ENCODE measurements at regions of chr7 and their contacts with region 1.

Region 1: GRCh38 chr7:47818796-47819606 is 129.3 kb downstream of the PKD1L1 start:
- DNase-seq: peak; percentile 41 to 59 (median 50)
- H3K4me3 ChIP-seq: no peak overlapping the region
- H3K4me3 Mint-ChIP-seq: no peak overlapping the region
- H3K27ac ChIP-seq: no peak overlapping the region
- H3K27ac Mint-ChIP-seq: no peak overlapping the region
- H3K4me1 ChIP-seq: peaks cover 11 to 13% of the 10 kb centered on the region in 2 donors
- H3K4me1 Mint-ChIP-seq: peaks cover 20% of the 10 kb centered on the region
- H3K27me3 ChIP-seq: no peaks in the 10 kb centered on the region
- H3K27me3 Mint-ChIP-seq: peaks cover 0 to 2% (median 2%) of the 10 kb centered on the region in 3 donors
- CTCF ChIP-seq: peak; percentile 95

Region 2: DNA sequence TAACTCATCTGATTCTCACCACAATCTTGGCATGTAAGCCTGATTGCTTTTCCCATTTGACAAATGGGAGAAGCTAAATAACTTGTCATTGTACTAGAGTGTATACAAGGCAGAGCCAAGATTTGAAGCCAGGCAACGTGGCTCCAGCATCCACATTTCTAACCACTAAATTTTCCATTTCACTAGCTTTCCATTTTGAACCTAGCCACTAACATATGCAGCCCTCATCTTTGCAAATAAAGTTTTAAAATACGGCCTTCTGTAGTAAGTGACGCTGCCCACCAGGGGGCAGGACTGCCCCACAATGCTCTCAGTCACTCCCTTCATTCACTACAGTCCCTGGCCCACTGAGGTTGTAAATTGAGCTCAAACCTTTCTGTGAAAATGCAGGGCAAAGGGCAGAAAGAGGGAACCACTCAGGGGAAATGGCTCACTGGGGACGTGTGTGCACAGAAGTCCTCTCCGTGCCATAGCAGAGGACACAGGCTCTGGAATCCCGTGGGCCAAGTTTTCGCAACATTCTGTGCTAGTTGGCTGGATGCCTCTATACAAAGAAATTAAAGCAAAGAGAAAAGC is 552.8 kb before region 1 on chr7:
- intact Hi-C with region 1: loop called (anchors 2 to 5 kb)
- DNase-seq: peak; percentile 22 to 48 (median 41)
- H3K4me3 ChIP-seq: no peak overlapping the region
- H3K4me3 Mint-ChIP-seq: no peak overlapping the region
- H3K27ac ChIP-seq: no peak overlapping the region
- H3K27ac Mint-ChIP-seq: peak overlapping the region in 1 of 7 donors; percentile 49
- H3K4me1 ChIP-seq: no peaks in the 10 kb centered on the region
- H3K4me1 Mint-ChIP-seq: peaks cover 12% of the 10 kb centered on the region
- H3K27me3 ChIP-seq: no peaks in the 10 kb centered on the region
- H3K27me3 Mint-ChIP-seq: peaks cover 0 to 5% (median 0%) of the 10 kb centered on the region in 3 donors
- CTCF ChIP-seq: peak; percentile 97

Region 3: GRCh38 chr7:47435889-47436312 is 383.1 kb before region 1 on chr7:
- intact Hi-C with region 1: loop called (anchors 5 to 10 kb)
- DNase-seq: no peak
- H3K4me3 ChIP-seq: no peak overlapping the region
- H3K4me3 Mint-ChIP-seq: no peak overlapping the region
- H3K27ac ChIP-seq: peak overlapping the region in 1 of 2 donors; percentile 16
- H3K27ac Mint-ChIP-seq: peak overlapping the region in 1 of 7 donors; percentile 50
- H3K4me1 ChIP-seq: no peaks in the 10 kb centered on the region
- H3K4me1 Mint-ChIP-seq: no peaks in the 10 kb centered on the region
- H3K27me3 ChIP-seq: no peaks in the 10 kb centered on the region
- H3K27me3 Mint-ChIP-seq: no peaks in the 10 kb centered on the region
- CTCF ChIP-seq: peak; percentile 35

Region 4: DNA sequence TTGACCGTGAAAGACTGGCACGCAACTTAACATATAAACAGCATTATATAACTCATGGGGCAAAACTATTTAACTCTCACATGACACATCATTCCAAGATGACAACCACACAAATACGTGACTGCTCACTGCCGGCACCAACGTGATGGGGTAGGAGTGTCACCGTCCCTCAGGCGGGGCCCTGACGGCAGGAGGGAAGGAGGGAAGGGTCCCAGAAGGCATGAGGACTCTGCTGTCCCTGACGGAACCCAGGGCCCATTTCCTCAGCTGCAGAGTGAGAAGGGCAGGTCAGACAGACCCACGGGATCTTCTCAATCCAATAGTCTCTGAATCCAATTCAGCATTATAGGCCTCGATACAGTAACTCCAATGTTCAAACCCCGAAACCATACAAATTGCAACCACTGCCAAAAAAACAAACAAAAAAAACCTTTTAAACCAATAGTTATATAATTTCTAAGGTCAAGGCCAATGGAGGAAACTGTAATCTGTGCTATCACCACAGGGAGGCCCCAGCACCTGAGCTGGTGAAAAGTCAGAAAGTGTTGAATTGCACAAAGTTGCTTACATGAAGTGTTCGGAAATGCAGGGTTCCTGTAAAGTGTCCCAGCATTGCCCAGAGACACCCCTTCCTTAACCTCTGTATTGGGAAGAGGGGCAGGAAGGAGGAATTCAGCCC is 374.5 kb before region 1 on chr7:
- intact Hi-C with region 1: loop called (anchors 5 to 10 kb)
- DNase-seq: peak in 2 of 3 donors; percentile 8 to 18
- H3K4me3 ChIP-seq: no peak overlapping the region
- H3K4me3 Mint-ChIP-seq: no peak overlapping the region
- H3K27ac ChIP-seq: no peak overlapping the region
- H3K27ac Mint-ChIP-seq: peak overlapping the region in 4 of 7 donors; percentile 43 to 83 (median 54)
- H3K4me1 ChIP-seq: no peaks in the 10 kb centered on the region
- H3K4me1 Mint-ChIP-seq: no peaks in the 10 kb centered on the region
- H3K27me3 ChIP-seq: no peaks in the 10 kb centered on the region
- H3K27me3 Mint-ChIP-seq: no peaks in the 10 kb centered on the region
- CTCF ChIP-seq: peak; percentile 66

Measured in CD14-positive monocyte (primary cell).